Activated CD4-positive, alpha-beta T cell treated with anti-CD3 and anti-CD28 coated beads, Interleukin-2, amount 10 ng/mL, durations not matched to agents 24 days and 14 days (primary cell): ENCODE measurements at regions of chr5 and their contacts with region 1.

Region 1: GRCh38 chr5:141512390-141512910 is 23.6 kb downstream of the PCDHGC5 start:
- DNase-seq: peak; percentile 95
- H3K4me3 Mint-ChIP-seq: peak overlapping the region; percentile 84
- H3K27ac Mint-ChIP-seq: peak overlapping the region; percentile 87
- H3K4me1 Mint-ChIP-seq: peaks cover 31% of the 10 kb centered on the region
- H3K27me3 Mint-ChIP-seq: no peaks in the 10 kb centered on the region

Region 2: GRCh38 chr5:141320225-141321169 is 192.0 kb before region 1 on chr5 and contains the start of gene TAF7:
- intact Hi-C with region 1: loop called (anchors 1 kb)
- DNase-seq: peak; percentile 98
- H3K4me3 Mint-ChIP-seq: peak within 1 kb of the TSS; percentile 92
- H3K27ac Mint-ChIP-seq: peak within 1 kb of the TSS; percentile 99
- H3K4me1 Mint-ChIP-seq: peaks cover 12% of the 10 kb centered on the region
- H3K27me3 Mint-ChIP-seq: peaks cover 2% of the 10 kb centered on the region
- total RNA-seq, gene TAF7: 71.5 and 75.0 TPM in 2 replicates

Region 3: DNA sequence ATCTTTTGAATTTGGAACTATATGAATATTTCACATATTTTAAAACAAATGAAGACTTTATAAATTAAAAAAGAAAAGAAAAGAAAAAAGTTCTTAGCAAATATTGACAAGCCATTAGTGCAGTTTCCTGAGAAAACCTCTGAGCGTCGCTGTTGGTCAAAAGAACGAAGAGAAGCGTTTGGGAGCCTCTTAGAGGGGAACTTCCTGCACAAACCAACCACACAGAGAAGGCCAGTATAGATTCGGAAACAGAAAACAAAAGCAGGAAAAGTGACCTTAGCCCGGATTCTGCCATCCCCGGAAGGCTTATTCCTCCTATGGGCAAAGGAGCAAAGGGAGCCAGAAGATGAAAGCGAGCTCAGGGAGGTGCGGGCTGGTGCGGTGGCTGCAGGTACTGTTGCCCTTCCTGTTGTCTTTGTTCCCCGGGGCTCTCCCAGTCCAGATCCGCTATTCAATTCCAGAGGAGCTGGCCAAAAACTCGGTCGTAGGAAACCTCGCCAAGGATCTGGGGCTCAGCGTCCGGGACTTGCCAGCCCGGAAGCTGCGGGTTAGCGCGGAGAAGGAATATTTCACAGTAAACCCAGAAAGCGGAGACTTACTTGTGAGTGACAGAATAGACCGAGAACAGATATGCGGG is 152.5 kb before region 1 on chr5 and contains the start of gene PCDHGB2:
- intact Hi-C with region 1: loop called (anchors 5 kb)
- DNase-seq: peak; percentile 73
- H3K4me3 Mint-ChIP-seq: peak within 1 kb of the TSS; percentile 80
- H3K27ac Mint-ChIP-seq: peak within 1 kb of the TSS; percentile 18
- H3K4me1 Mint-ChIP-seq: no peaks in the 10 kb centered on the region
- H3K27me3 Mint-ChIP-seq: peaks cover 32% of the 10 kb centered on the region
- total RNA-seq, gene PCDHGB2: 0.63 and 0.97 TPM in 2 replicates

Region 4: DNA sequence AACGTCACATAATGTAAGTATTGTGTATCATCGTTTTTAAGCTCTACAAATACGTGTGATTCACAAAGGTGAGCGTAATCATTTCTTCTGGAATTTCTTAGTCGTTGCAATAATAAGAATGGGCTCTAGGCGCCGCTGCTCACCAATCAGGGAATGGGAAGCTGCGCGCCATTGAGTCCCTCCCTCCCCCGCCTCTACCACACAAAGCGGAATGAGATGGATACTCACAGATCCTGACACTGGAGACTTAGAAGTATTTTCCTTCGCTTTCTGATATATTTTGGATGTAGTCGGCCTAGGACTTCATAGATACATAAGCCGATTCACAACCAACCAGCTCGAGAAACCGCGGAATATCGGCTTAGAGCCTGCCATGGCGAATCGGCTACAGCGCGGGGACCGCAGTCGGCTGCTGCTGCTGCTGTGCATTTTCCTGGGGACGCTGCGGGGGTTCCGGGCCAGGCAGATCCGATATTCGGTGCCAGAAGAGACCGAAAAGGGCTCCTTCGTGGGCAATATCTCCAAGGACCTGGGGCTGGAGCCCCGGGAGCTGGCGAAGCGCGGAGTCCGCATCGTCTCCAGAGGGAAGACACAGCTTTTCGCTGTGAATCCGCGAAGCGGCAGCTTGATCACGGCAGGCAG is 91.5 kb before region 1 on chr5 and contains the start of gene PCDHGA11:
- intact Hi-C with region 1: loop called (anchors 2 kb)
- DNase-seq: peak; percentile 85
- H3K4me3 Mint-ChIP-seq: peak within 1 kb of the TSS; percentile 84
- H3K27ac Mint-ChIP-seq: peak within 1 kb of the TSS; percentile 30
- H3K4me1 Mint-ChIP-seq: peaks cover 18% of the 10 kb centered on the region
- H3K27me3 Mint-ChIP-seq: peaks cover 53% of the 10 kb centered on the region
- total RNA-seq, gene PCDHGA11: 0.23 and 0.31 TPM in 2 replicates

Region 5: DNA sequence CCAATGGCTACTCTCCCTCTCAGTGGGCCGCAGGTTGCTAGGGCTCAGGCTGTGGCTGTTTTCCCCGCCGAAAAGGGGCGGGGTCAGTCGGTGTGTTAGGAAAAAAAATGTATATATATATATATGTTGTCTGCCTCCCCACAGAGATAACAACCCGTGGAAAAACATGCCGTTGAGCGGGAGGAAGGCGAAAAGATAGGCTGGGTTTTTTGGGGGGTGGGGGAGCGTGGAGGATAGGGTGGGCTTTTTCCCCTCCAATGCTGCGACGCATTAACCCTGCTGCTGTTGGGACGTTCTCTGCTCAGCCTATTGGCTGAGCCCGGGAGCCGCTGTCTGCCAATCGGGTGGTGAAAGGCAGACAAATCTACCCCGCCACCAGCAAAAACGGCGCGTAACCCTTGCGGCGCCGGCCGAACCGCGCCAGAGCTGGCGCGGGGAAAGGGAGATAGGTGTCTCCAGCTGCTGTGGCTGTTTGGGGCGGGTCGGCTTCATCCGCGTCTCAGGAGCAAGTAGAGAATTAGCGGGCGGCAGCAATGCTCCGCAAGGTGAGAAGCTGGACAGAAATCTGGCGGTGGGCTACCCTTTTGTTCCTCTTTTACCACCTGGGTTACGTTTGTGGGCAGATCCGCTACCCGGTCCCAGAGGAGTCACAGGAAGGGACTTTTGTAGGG is 27.7 kb before region 1 on chr5 and contains the start of gene PCDHGC4:
- intact Hi-C with region 1: no loop called
- DNase-seq: no peak
- H3K4me3 Mint-ChIP-seq: no peak within 1 kb of the TSS
- H3K27ac Mint-ChIP-seq: no peak within 1 kb of the TSS
- H3K4me1 Mint-ChIP-seq: no peaks in the 10 kb centered on the region
- H3K27me3 Mint-ChIP-seq: peaks cover 60% of the 10 kb centered on the region
- total RNA-seq, gene PCDHGC4: not detected in 2 replicates

Region 6: DNA sequence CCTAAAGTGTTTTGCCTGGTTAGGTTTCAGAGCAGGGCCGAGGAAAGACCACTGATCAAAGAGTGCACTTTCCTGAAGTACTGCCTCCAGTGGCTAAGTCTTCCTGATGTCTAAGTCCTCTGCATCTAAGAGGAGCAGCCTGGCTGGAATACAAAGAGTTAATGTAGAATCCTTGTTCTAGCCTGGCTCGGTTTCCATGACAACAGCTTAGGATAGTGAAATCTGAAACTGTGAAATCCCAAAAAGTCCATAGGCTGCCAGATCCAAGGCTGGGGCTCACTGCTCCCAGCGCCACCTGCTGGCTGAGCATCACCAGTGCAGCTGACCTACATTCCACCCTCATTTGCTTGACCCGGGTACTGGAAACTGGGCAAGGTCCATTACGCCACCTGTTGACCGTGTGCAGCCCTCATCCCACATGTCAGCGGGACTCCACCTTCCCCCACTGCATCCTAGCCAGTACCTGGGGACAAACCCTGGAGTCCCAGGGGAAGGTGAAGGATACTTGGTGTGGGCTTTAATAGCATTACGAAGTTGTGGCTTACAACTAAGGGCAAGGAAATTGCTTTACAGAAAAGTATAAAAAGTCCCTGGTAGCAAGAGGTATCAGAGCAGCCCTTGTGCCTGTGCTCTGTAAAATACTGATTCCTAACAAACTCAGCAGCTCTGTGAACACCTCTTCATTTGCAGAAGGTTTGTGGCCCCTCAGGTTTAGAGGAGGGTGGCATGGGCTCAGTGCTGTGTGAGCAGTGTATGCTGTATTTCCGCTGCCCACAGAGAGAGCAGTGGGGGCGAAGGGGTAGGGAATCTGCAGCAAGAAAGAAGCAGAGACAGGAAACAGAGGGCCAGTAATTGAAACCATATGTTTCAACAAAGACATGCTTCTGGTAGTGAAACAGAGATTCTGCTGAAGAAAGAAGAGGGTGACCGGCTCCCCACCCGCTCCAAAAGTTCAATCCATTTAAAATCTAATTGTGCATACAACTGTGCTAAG is 12.5 kb after region 1 on chr5:
- intact Hi-C with region 1: loop called (anchors 1 kb)
- DNase-seq: peak; percentile 85
- H3K4me3 Mint-ChIP-seq: no peak overlapping the region
- H3K27ac Mint-ChIP-seq: peak overlapping the region; percentile 10
- H3K4me1 Mint-ChIP-seq: peaks cover 29% of the 10 kb centered on the region
- H3K27me3 Mint-ChIP-seq: no peaks in the 10 kb centered on the region

Region 7: GRCh38 chr5:141547488-141547887 is 35.0 kb after region 1 on chr5:
- intact Hi-C with region 1: no loop called
- DNase-seq: no peak
- H3K4me3 Mint-ChIP-seq: no peak overlapping the region
- H3K27ac Mint-ChIP-seq: no peak overlapping the region
- H3K4me1 Mint-ChIP-seq: peaks cover 4% of the 10 kb centered on the region
- H3K27me3 Mint-ChIP-seq: no peaks in the 10 kb centered on the region